ENCODE measurements at regions of chr2 and their contacts with region 1.

Region 1: DNA sequence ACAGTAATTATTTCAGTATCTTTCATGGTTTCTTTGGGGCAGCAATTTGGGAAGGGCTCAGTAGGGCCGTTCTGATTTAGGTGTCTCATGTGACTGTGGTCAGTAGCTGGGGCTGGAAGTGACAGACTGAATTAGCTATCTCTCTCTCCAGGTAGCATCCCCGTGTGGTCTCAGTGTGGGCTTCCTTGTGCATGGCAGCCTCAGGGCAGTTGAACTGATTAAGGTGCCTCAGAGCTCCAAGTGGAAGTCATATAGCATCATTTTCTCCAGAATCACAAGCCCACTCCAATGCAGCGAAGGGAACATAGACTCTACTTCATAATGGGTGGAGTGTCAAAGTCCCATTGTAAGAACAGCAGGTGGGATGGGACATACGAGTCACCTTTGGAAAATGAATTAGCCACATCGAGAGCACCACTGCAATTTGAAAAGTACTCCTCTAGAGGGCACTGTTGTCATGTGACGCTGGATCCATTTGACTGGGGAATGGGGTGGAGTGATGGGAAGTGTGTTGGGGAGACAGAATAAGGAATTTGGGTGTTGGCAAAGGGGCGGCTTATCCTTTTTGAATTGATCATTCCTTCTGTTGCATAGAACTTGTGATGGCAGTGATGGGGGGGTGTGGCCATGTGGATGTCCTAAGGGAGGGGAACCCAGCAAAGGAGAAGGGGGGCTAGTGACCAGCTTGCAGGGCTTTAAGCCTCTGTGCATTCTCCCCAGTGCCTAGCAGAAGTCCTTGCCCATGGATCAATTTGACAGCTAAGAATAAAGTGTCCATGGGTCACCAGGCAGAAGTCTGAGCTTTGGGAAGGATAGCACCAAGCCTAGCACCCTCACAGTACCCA is 39.3 kb upstream of the FAM136A start:
- DNase-seq: peak; percentile 76
- H3K4me3 ChIP-seq: no peak overlapping the region; a peak in 1 of 4 replicates
- H3K27ac ChIP-seq: no peak overlapping the region
- H3K4me1 ChIP-seq: no peaks in the 10 kb centered on the region
- H3K27me3 ChIP-seq: peaks cover 13% of the 10 kb centered on the region; the same call in 1 of the 2 replicates
- CTCF ChIP-seq: peak; percentile 81
- EP300 ChIP-seq: no peak
- RAD21 ChIP-seq: peak; percentile 93

Region 2: DNA sequence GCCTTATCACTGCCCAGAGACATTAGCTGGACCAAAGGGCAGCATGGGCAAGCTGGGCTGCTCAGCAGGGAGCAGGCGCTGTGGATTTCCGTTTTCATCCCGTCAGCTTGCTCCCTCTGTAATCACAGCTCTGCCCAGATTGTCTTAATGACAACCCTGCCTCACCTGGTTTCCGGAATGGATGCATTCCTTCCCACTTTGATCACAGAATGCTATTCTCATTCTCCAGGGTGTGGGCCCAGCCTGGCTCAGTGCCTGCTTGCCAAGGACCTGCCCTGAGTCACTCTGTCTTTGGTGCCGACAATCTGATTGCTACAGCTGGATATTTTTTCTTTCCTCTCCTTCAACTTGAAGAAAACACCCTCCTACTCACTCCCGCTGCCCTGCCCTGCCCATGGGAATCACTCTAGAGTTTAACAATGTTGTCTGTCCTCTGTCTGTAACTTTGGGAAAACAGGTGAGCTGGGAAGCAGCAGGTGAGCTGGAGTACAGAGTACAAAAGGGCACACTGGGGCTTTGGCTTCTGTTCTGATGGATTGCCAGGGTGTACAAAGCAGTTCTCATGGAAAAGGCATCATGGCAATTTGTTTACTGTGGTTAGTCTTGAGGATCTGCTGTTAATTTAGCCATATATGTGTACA is 12.1 kb before region 1 on chr2:
- CTCF ChIA-PET with region 1: interaction called, 45 read pairs
- POLR2A ChIA-PET with region 1: no interaction called
- DNase-seq: no peak
- H3K4me3 ChIP-seq: no peak overlapping the region
- H3K27ac ChIP-seq: no peak overlapping the region
- H3K4me1 ChIP-seq: no peaks in the 10 kb centered on the region
- H3K27me3 ChIP-seq: no peaks in the 10 kb centered on the region; the same call in 1 of the 2 replicates
- CTCF ChIP-seq: no peak
- EP300 ChIP-seq: no peak
- RAD21 ChIP-seq: no peak

Region 3: GRCh38 chr2:70357684-70358071 is 16.5 kb after region 1 on chr2:
- CTCF ChIA-PET with region 1: interaction called, 12 read pairs
- POLR2A ChIA-PET with region 1: no interaction called
- DNase-seq: no peak
- H3K4me3 ChIP-seq: no peak overlapping the region
- H3K27ac ChIP-seq: no peak overlapping the region
- H3K4me1 ChIP-seq: no peaks in the 10 kb centered on the region
- H3K27me3 ChIP-seq: no peaks in the 10 kb centered on the region
- CTCF ChIP-seq: no peak
- EP300 ChIP-seq: no peak
- RAD21 ChIP-seq: no peak

Region 4: DNA sequence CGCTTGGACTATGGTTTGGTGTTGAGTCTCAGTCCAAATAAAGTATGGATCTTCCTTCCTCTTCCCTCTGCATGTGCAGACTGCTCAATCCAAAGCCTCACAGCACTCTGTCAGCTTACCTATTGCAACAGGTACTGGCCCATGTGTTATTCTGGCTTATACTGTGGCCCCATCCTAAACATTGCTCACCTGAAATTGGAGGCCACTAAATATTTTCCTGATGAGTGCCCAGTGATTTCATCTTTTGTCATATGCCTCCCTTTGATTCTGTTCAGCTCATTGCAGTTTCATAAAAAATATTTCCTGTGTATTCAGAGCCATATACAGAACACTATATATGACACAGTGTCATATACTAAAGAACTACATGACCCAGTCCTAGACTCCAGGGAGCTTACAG is 47.0 kb after region 1 on chr2:
- CTCF ChIA-PET with region 1: interaction called, 13 read pairs
- POLR2A ChIA-PET with region 1: no interaction called
- DNase-seq: no peak
- H3K4me3 ChIP-seq: no peak overlapping the region
- H3K27ac ChIP-seq: no peak overlapping the region
- H3K4me1 ChIP-seq: no peaks in the 10 kb centered on the region
- H3K27me3 ChIP-seq: no peaks in the 10 kb centered on the region
- CTCF ChIP-seq: no peak
- EP300 ChIP-seq: no peak
- RAD21 ChIP-seq: no peak

Region 5: GRCh38 chr2:70431716-70432347 is 90.7 kb after region 1 on chr2:
- CTCF ChIA-PET with region 1: no interaction called
- POLR2A ChIA-PET with region 1: no interaction called
- DNase-seq: no peak
- H3K4me3 ChIP-seq: no peak overlapping the region
- H3K27ac ChIP-seq: no peak overlapping the region
- H3K4me1 ChIP-seq: no peaks in the 10 kb centered on the region
- H3K27me3 ChIP-seq: no peaks in the 10 kb centered on the region
- CTCF ChIP-seq: no peak
- EP300 ChIP-seq: no peak
- RAD21 ChIP-seq: no peak

Region 6: GRCh38 chr2:70641263-70641784 is 300.2 kb after region 1 on chr2:
- CTCF ChIA-PET with region 1: interaction called, 36 read pairs
- POLR2A ChIA-PET with region 1: no interaction called
- DNase-seq: no peak
- H3K4me3 ChIP-seq: no peak overlapping the region
- H3K27ac ChIP-seq: no peak overlapping the region
- H3K4me1 ChIP-seq: no peaks in the 10 kb centered on the region
- H3K27me3 ChIP-seq: no peaks in the 10 kb centered on the region
- CTCF ChIP-seq: no peak
- EP300 ChIP-seq: no peak
- RAD21 ChIP-seq: no peak

Region 7: GRCh38 chr2:70647873-70648481 is 306.8 kb after region 1 on chr2:
- CTCF ChIA-PET with region 1: interaction called, 36 read pairs
- POLR2A ChIA-PET with region 1: no interaction called
- DNase-seq: peak; percentile 73
- H3K4me3 ChIP-seq: peak overlapping the region in 1 of 2 experiments; percentile 47; a peak in 1 of 4 replicates
- H3K27ac ChIP-seq: no peak overlapping the region
- H3K4me1 ChIP-seq: no peaks in the 10 kb centered on the region
- H3K27me3 ChIP-seq: 0 out of 2 replicates have a peak, but pooled peaks cover 6% of the 10 kb centered on the region
- CTCF ChIP-seq: peak; percentile 93
- EP300 ChIP-seq: no peak
- RAD21 ChIP-seq: peak; percentile 91